Activated CD8-positive, alpha-beta T cell treated with anti-CD3 and anti-CD28 coated beads, Interleukin-2, amount 10 ng/mL, durations not matched to agents 7 days and 5 days (primary cell): ENCODE measurements at regions of chr14 and their contacts with region 1.

Region 1: DNA sequence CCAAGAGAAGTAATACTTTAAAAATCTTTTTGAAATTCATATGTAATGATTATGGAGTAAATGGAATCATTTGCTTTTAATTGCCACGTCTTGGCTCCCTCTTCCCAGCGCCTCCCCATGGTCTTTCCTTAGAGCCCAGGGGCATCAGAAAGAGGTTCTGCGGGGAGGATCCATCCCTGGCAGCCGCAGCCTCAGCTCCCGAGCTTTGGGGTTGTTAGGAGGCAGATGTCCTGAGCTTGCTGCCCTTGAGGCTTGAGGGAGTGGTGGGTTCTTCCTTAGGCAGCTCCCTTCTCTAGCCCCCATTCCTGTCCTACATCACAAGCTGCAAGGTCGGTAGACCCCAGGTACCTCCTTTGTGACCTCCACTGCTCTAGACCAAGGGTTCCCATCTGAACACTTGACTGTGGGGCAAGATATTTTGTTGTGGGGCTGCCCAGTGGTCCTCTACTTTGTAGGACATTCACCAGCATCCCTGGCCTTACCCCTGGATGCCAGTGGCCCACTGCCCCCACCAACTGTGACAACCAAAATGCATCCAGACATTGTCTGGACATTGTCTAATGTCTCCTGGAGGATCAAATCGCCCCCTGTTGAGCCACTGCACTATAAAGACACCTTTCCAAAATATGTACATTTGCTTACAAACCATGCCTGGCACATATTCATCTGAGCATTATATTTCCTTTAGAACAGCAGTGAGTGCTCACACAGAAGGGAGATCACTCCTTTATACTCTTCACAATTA is 6.3 kb downstream of the PPP2R5C start:
- DNase-seq: no peak
- ATAC-seq: no peak
- H3K4me3 Mint-ChIP-seq: no peak overlapping the region
- H3K27ac Mint-ChIP-seq: no peak overlapping the region
- H3K4me1 Mint-ChIP-seq: peaks cover 2% of the 10 kb centered on the region
- H3K27me3 Mint-ChIP-seq: no peaks in the 10 kb centered on the region

Region 2: DNA sequence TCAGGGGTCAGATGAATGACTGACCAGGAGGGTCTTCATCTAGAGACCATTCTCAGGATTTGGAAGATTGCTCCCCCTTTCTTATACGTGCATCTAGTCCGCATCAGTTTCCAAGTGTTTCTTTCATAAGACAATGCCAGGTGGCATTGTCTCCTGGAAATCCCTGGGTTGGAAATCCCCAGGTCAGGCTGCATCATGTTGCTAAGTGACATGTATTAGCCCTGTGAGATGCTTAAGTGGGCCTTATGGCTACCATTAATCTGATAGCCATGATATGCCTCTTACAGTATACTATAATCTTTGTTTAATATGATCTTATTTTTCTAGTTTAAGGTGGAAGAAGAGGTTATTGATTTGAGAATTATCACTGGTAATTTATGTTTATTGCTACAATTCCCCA is 113.7 kb before region 1 on chr14:
- CTCF ChIA-PET with region 1: no interaction called
- POLR2A ChIA-PET with region 1: no interaction called
- DNase-seq: no peak
- ATAC-seq: no peak
- H3K4me3 Mint-ChIP-seq: no peak overlapping the region
- H3K27ac Mint-ChIP-seq: no peak overlapping the region
- H3K4me1 Mint-ChIP-seq: peaks cover 2% of the 10 kb centered on the region
- H3K27me3 Mint-ChIP-seq: peaks cover 60% of the 10 kb centered on the region

Region 3: GRCh38 chr14:101781240-101782061 is 13.7 kb after region 1 on chr14:
- CTCF ChIA-PET with region 1: interaction called, 12 read pairs
- POLR2A ChIA-PET with region 1: interaction called, 4 read pairs
- DNase-seq: peak; percentile 49
- ATAC-seq: peak; percentile 81
- H3K4me3 Mint-ChIP-seq: peak overlapping the region; percentile 43
- H3K27ac Mint-ChIP-seq: no peak overlapping the region
- H3K4me1 Mint-ChIP-seq: no peaks in the 10 kb centered on the region
- H3K27me3 Mint-ChIP-seq: peaks cover 20% of the 10 kb centered on the region

Region 4: GRCh38 chr14:101817501-101818001 is 49.8 kb after region 1 on chr14:
- CTCF ChIA-PET with region 1: interaction called, 54 read pairs
- POLR2A ChIA-PET with region 1: interaction called, 8 read pairs
- DNase-seq: peak; percentile 63
- ATAC-seq: peak; percentile 24
- H3K4me3 Mint-ChIP-seq: peak overlapping the region; percentile 82
- H3K27ac Mint-ChIP-seq: peak overlapping the region; percentile 92
- H3K4me1 Mint-ChIP-seq: peaks cover 90% of the 10 kb centered on the region
- H3K27me3 Mint-ChIP-seq: no peaks in the 10 kb centered on the region

Region 5: DNA sequence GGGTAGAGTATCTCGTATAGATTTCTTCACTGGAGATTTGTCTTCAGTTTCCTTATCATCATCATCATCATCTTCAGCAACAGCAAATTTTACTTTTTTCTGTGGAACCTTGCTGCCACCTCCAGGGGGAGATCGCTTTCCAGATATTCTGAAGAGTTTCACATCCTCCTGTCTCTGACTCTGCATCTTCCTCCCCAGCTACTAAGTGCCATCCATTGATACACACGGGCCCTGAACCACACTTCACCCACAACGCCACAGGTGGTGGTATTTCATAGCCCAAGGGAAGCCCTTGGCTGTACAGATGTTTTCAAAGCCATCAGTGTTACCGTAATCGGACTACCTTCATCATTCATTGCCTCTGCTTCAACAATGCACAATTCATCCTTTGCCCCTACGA is 75.9 kb after region 1 on chr14:
- CTCF ChIA-PET with region 1: interaction called, 37 read pairs
- POLR2A ChIA-PET with region 1: interaction called, 5 read pairs
- DNase-seq: peak; percentile 70
- ATAC-seq: peak; percentile 74
- H3K4me3 Mint-ChIP-seq: no peak overlapping the region
- H3K27ac Mint-ChIP-seq: peak overlapping the region; percentile 73
- H3K4me1 Mint-ChIP-seq: peaks cover 83% of the 10 kb centered on the region
- H3K27me3 Mint-ChIP-seq: no peaks in the 10 kb centered on the region

Region 6: DNA sequence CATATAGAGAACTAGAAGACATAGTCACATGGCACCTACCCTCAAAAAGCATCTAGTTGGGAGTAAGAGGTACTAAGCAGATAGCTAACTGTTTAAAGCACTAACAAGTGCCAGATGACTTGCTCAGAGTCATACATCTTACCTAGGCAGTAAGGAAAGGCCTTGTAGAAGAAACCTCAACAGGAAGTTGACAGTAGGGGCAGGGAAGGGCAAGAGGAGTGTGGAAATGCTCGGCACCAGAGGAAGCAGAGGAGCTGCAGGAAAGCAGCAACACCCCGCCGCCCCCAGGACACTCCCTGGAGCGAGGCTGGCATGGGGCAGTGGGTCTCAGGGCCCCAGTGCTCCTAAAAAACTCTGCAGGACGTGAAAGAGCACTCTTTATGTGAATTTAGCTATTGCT is 86.6 kb after region 1 on chr14:
- CTCF ChIA-PET with region 1: interaction called, 13 read pairs
- POLR2A ChIA-PET with region 1: interaction called, 6 read pairs
- DNase-seq: no peak
- ATAC-seq: peak; percentile 65
- H3K4me3 Mint-ChIP-seq: no peak overlapping the region
- H3K27ac Mint-ChIP-seq: peak overlapping the region; percentile 65
- H3K4me1 Mint-ChIP-seq: peaks cover 57% of the 10 kb centered on the region
- H3K27me3 Mint-ChIP-seq: no peaks in the 10 kb centered on the region

Region 7: GRCh38 chr14:101947906-101948665 is 180.3 kb after region 1 on chr14:
- CTCF ChIA-PET with region 1: interaction called, 12 read pairs
- POLR2A ChIA-PET with region 1: interaction called, 5 read pairs
- DNase-seq: peak; percentile 100
- ATAC-seq: peak; percentile 98
- H3K4me3 Mint-ChIP-seq: peak overlapping the region; percentile 97
- H3K27ac Mint-ChIP-seq: peak overlapping the region; percentile 97
- H3K4me1 Mint-ChIP-seq: peaks cover 18% of the 10 kb centered on the region
- H3K27me3 Mint-ChIP-seq: peaks cover 19% of the 10 kb centered on the region

Region 8: DNA sequence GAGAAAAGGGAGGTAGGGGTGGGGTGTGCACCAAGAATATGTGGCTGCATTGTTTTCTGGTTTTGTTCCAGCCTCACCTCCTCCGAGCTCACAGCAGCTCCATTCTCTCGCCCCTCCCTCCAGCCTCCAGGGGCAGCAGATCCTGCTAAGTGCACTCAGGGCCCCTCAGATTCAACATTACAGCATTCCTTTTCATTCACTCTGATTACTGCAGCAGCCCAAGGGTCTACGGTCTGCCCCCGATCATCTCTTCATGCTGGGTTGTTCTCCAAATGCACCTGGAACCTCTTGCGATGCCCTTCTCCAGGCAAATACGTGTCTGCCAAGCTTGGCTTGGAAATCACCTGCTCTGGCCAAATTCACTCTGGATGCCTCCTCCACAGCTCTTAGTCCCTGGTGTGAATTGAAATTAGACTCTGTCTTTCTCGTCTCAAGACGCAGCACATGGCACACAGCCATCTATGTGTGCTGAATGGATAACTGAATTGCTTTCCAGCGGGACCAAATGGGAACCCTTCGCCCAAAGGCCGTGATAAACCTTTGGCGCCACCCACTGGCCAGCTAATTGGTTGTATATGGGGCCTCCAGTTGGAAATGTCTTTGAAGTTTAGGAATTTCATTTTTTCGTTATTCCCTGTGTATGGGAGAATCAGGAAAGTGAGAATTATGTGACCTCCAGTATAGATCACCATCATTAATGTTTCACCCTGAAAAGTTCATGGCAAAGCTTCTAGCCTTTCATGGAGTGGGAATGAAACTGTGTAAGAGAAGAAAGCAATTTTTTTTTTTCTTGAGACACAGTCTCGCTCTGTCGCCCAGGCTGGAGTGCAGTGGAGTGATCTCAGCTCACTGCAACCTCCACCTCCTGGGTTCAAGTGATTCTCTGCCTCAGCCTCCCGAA is 328.7 kb after region 1 on chr14:
- CTCF ChIA-PET with region 1: interaction called, 10 read pairs
- POLR2A ChIA-PET with region 1: no interaction called
- DNase-seq: peak; percentile 74
- ATAC-seq: peak; percentile 82
- H3K4me3 Mint-ChIP-seq: no peak overlapping the region
- H3K27ac Mint-ChIP-seq: no peak overlapping the region
- H3K4me1 Mint-ChIP-seq: peaks cover 9% of the 10 kb centered on the region
- H3K27me3 Mint-ChIP-seq: no peaks in the 10 kb centered on the region

Region 9: DNA sequence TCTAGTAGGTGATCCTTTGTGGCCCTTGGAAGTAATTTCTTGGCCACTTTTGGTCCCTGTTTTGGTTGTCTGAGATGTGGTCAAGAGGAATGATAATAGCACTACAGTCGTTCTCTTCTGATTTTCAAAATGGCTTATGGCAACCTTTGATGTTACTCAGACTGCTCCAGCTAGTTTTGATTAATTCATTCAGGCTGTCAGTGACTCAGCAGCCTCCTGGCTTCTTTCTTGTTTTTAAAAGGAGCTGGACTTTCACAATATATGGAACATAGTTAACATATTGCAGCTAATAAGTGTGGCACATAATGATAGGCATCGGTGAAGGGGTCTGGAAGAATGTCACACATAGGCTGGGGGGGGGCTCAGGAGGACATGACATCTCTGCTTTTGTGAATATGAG is 419.3 kb after region 1 on chr14:
- CTCF ChIA-PET with region 1: no interaction called
- POLR2A ChIA-PET with region 1: no interaction called
- DNase-seq: no peak
- ATAC-seq: no peak
- H3K4me3 Mint-ChIP-seq: no peak overlapping the region
- H3K27ac Mint-ChIP-seq: no peak overlapping the region
- H3K4me1 Mint-ChIP-seq: peaks cover 27% of the 10 kb centered on the region
- H3K27me3 Mint-ChIP-seq: no peaks in the 10 kb centered on the region